Psoas muscle (tissue), 8 donors: ENCODE measurements at regions of chr20 and their contacts with region 1.

Region 1: GRCh38 chr20:44210422-44211176 is at the start of gene OSER1:
- DNase-seq: peak; percentile 96 to 99
- ATAC-seq: peak; percentile 87 to 93 (median 88)
- H3K4me3 ChIP-seq: peak within 1 kb of the TSS; percentile 77
- H3K27ac ChIP-seq: peak within 1 kb of the TSS; percentile 92
- H3K4me1 ChIP-seq: peaks cover 36% of the 10 kb centered on the region
- H3K27me3 ChIP-seq: no peaks in the 10 kb centered on the region
- CTCF ChIP-seq: no peak
- total RNA-seq, gene OSER1: 46.0 to 97.6 (median 61.7) TPM

Region 2: DNA sequence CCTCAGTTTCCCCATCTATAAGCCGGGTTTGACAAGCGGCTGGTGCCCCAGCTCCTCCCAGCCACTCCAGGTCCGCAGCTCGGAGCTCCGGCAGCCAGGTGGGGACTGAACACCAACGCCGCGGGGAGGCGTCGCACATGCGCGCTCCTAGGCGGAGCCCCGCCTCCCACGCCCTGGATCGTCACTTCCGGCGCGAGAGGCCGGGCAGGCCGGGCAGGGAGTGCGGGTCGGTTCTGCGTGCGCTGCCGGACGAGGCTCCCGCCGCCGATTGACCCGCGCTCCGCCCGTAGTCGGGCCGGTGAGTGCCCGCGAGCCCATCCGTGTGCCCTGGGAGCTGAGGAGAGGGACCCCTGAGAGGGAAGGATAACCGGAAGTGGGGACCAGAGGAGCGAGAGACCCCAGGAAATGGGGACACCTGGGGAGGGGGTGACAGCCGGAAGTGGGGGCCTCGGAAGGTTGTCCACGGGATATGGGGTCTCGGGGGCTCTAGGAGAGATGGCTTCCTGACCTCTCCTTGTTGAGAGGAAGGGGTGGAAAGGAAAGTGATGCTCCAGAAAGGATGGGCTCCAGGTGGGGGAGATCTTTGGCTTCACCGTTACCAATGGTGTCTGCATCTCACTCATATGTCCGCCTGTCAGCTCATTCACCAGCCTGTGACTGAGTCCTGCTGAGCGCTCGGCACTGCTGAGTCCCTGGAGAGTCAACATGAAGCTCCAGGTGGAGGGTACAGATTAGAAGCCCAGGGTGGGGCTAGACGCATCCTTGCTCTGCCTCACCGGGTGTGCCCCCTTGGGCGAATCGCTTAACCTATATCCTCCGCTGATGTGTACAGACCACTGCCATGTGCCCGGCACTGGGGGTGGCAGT is 265.3 kb after region 1 on chr20 and contains the start of gene TTPAL:
- intact Hi-C with region 1: loop called (anchors 5 to 10 kb)
- DNase-seq: peak; percentile 90 to 93
- ATAC-seq: peak; percentile 96 to 98 (median 98)
- H3K4me3 ChIP-seq: peak within 1 kb of the TSS; percentile 90
- H3K27ac ChIP-seq: peak within 1 kb of the TSS; percentile 95
- H3K4me1 ChIP-seq: peaks cover 18% of the 10 kb centered on the region
- H3K27me3 ChIP-seq: no peaks in the 10 kb centered on the region
- CTCF ChIP-seq: peak; percentile 41
- total RNA-seq, gene TTPAL: 3.2 to 8.4 (median 5.4) TPM

Region 3: DNA sequence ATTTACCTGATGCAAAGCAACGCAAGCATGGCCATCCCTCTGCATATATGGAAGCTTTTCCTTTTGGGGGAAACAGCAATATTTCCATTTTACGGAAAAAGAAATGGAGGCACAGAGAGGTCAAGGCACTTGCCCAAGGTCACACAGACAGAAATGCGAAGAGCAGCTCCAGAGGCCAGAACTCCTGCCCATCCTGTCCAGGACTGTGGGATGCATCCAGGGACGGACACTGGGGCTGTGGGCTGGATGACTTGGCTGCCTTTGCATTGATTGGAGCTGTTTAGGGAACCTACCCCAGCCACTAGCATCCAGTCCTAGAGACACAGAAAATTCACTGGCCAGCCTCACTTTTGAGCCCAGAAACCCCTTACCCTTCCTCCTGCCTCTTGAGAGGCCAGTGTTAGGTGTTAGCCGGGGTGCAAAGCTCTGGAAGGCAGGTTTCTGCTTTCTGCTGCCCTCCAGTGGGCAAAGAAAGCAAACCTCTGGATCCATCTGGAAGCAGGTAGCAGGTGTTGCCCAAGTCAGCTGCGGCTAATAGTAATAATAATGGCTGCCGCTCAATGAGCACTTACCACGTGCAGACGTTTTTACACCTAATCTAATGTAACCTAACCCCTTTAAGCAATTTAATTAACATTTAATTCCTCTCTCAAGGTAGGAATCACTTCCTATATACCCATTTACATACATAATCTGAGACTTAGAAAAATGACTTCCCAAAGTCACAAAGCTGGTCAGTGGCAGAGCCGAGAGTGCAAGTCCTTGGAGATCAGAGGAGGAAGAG is 472.9 kb after region 1 on chr20:
- intact Hi-C with region 1: loop called in 1 of 2 experiments (anchors 10 kb)
- DNase-seq: no peak
- ATAC-seq: peak; percentile 52 to 77 (median 60)
- H3K4me3 ChIP-seq: no peak overlapping the region
- H3K27ac ChIP-seq: no peak overlapping the region
- H3K4me1 ChIP-seq: peaks cover 7% of the 10 kb centered on the region
- H3K27me3 ChIP-seq: no peaks in the 10 kb centered on the region
- CTCF ChIP-seq: peak; percentile 67

Region 4: GRCh38 chr20:44738813-44739477 is 528.3 kb after region 1 on chr20:
- intact Hi-C with region 1: loop called in 1 of 2 experiments (anchors 5 kb)
- DNase-seq: peak in 1 of 2 donors; percentile 64
- ATAC-seq: peak; percentile 72 to 88 (median 83)
- H3K4me3 ChIP-seq: no peak overlapping the region
- H3K27ac ChIP-seq: peak overlapping the region; percentile 40
- H3K4me1 ChIP-seq: peaks cover 11% of the 10 kb centered on the region
- H3K27me3 ChIP-seq: no peaks in the 10 kb centered on the region
- CTCF ChIP-seq: no peak

Region 5: DNA sequence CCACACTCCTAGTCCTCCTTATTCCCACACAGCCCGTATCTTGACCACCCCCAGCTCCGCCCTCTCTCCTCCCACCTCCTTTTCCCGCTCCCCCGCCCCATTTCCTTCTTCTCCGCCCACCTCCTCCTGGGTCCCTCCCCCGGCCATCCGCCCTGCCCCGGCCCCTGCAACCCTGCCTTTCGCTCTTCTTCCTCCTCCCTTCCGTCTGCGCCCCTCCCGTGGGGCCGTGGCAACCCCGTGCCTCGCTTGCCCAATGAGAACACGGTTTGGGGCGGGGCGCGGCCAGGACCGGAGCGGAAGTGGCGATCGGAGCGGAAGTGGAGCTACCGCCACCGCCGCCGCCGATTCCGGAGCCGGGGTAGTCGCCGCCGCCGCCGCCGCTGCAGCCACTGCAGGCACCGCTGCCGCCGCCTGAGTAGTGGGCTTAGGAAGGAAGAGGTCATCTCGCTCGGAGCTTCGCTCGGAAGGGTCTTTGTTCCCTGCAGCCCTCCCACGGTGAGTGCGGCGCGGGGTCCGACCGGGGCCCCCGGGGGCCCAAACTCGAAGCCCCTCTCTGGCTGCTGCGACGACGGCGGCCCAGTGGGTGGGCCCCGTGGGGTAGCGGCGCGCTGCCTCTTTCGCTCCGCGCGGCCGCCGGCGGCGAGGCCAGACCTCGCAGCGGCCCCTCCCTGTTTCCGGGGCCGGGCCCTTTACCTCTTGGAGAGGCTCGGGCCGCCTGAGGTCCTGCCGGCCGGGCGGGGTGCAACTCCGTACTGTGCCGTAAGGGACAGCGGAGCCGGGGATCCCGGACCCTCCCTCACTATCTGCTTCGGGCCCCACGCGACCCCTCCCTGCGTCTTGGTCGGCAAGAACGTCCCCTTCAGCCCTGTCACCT is 675.0 kb after region 1 on chr20 and contains the start of gene YWHAB:
- intact Hi-C with region 1: loop called in 1 of 2 experiments (anchors 10 kb)
- DNase-seq: peak; percentile 99
- ATAC-seq: peak; percentile 99 to 100 (median 100)
- H3K4me3 ChIP-seq: peak within 1 kb of the TSS; percentile 83
- H3K27ac ChIP-seq: peak within 1 kb of the TSS; percentile 94
- H3K4me1 ChIP-seq: peaks cover 41% of the 10 kb centered on the region
- H3K27me3 ChIP-seq: no peaks in the 10 kb centered on the region
- CTCF ChIP-seq: no peak
- total RNA-seq, gene YWHAB: 63.2 to 92.1 (median 80.6) TPM

Region 6: GRCh38 chr20:45347936-45348778 is 1137.6 kb after region 1 on chr20 and contains the start of gene SDC4:
- intact Hi-C with region 1: loop called in 1 of 2 experiments (anchors 10 kb)
- DNase-seq: peak; percentile 79 to 88
- ATAC-seq: peak; percentile 62 to 74 (median 68)
- H3K4me3 ChIP-seq: peak within 1 kb of the TSS; percentile 79
- H3K27ac ChIP-seq: peak within 1 kb of the TSS; percentile 94
- H3K4me1 ChIP-seq: peaks cover 28% of the 10 kb centered on the region
- H3K27me3 ChIP-seq: no peaks in the 10 kb centered on the region
- CTCF ChIP-seq: no peak
- total RNA-seq, gene SDC4: 32.2 to 283 (median 161) TPM